ENCODE measurements at regions of chr10 and their contacts with region 1.

Region 1: DNA sequence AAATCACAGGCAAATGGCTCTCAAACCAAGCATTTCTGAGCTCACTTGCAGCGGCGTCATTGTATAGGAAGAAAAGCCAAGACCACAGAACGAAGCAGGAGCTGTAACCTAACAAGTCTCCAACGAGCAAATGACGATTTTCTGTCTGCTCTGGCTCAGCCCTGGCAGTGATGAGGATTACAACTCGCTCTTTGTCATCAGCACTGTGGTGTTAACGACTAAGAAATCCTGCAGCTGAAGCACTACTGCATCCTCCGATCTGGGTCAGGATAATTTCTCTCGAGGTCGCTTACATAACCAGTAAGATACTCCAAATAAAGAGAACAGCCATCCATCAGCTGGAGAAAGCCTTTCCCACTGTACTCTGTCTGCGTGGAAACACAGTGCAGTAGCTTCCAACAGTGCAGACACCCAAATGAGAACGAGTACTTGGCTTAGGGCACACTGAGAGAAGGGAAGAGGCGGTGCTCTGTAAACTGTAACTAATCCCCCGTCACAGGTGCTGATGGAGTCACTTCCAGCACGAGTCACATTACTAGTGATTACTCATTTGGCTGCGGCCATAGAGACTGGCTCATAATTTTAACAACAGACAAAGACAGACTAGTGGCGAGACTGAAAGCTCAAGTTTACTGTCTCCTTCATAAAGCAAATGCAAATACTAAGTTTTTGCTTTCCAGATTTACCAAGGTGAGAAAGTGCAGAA is 135.8 kb downstream of the NRBF2 start:
- DNase-seq: peak; percentile 81
- H3K4me3 Mint-ChIP-seq: peak overlapping the region; percentile 92
- H3K27ac Mint-ChIP-seq: peak overlapping the region; percentile 94
- H3K4me1 Mint-ChIP-seq: peaks cover 25% of the 10 kb centered on the region
- H3K27me3 Mint-ChIP-seq: no peaks in the 10 kb centered on the region

Region 2: GRCh38 chr10:62063795-62064472 is 1205.0 kb before region 1 on chr10:
- intact Hi-C with region 1: loop called (anchors 5 kb)
- DNase-seq: no peak
- H3K4me3 Mint-ChIP-seq: peak overlapping the region; percentile 39
- H3K27ac Mint-ChIP-seq: peak overlapping the region; percentile 87
- H3K4me1 Mint-ChIP-seq: peaks cover 72% of the 10 kb centered on the region
- H3K27me3 Mint-ChIP-seq: no peaks in the 10 kb centered on the region

Region 3: GRCh38 chr10:63133056-63133820 is 135.7 kb before region 1 on chr10 and contains the start of gene NRBF2:
- intact Hi-C with region 1: loop called (anchors 5 kb)
- DNase-seq: peak; percentile 96
- H3K4me3 Mint-ChIP-seq: peak within 1 kb of the TSS; percentile 94
- H3K27ac Mint-ChIP-seq: peak within 1 kb of the TSS; percentile 95
- H3K4me1 Mint-ChIP-seq: peaks cover 19% of the 10 kb centered on the region
- H3K27me3 Mint-ChIP-seq: peaks cover 3% of the 10 kb centered on the region
- total RNA-seq, gene NRBF2: 32.2 and 32.7 TPM in 2 replicates

Region 4: GRCh38 chr10:63217120-63217605 is 51.8 kb before region 1 on chr10:
- intact Hi-C with region 1: loop called (anchors 2 kb)
- DNase-seq: no peak
- H3K4me3 Mint-ChIP-seq: no peak overlapping the region
- H3K27ac Mint-ChIP-seq: no peak overlapping the region
- H3K4me1 Mint-ChIP-seq: peaks cover 39% of the 10 kb centered on the region
- H3K27me3 Mint-ChIP-seq: no peaks in the 10 kb centered on the region

Region 5: GRCh38 chr10:63297941-63298340 is 29.0 kb after region 1 on chr10:
- intact Hi-C with region 1: no loop called
- DNase-seq: no peak
- H3K4me3 Mint-ChIP-seq: no peak overlapping the region
- H3K27ac Mint-ChIP-seq: no peak overlapping the region
- H3K4me1 Mint-ChIP-seq: no peaks in the 10 kb centered on the region
- H3K27me3 Mint-ChIP-seq: no peaks in the 10 kb centered on the region

Region 6: DNA sequence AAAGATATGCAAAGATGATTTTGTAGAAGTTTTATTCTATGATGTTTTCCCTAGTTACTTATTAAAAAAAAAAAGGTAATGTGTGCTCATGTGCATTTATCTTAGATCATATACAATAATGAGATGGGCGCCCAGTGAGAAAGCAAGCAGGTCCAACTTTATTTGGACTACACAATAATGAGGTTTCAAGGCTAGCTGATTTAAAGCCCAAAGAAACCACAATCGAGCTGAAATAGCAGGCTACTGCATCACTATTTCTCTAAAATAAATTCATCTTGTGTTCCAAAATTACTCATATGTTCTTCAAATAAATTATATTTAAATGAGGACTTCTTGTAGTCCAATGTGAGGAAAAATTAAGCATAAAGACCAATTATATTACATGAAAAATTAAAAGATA is 86.7 kb after region 1 on chr10:
- intact Hi-C with region 1: loop called (anchors 1 kb)
- DNase-seq: no peak
- H3K4me3 Mint-ChIP-seq: no peak overlapping the region
- H3K27ac Mint-ChIP-seq: peak overlapping the region; percentile 28
- H3K4me1 Mint-ChIP-seq: peaks cover 17% of the 10 kb centered on the region
- H3K27me3 Mint-ChIP-seq: no peaks in the 10 kb centered on the region

Region 7: DNA sequence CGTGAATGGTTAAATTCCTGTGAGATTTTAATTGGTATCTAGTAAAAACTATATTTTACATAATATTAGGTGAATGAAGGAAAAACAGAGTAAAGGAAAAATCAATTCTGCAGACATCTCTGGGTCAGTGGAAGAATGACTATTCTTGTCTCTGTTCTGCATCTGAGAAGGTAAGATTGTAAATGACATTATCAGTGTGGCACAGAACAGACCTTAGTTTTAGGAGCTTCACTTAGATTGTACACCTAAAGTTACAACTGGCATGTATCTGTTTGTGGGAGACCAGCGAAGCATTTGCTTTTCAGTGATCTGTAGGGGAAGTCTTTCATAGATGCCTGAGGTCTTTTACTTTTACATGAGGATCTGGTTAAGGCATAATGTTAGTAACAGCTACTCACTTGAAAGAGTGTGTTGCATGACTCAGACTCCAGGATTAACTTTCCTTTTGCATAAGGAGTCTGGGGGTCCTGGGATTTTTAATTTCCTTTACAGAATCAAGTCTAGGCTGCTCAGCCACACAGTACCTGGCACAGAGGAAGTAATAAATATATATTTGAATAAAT is 140.6 kb after region 1 on chr10:
- intact Hi-C with region 1: no loop called
- DNase-seq: no peak
- H3K4me3 Mint-ChIP-seq: no peak overlapping the region
- H3K27ac Mint-ChIP-seq: no peak overlapping the region
- H3K4me1 Mint-ChIP-seq: peaks cover 9% of the 10 kb centered on the region
- H3K27me3 Mint-ChIP-seq: no peaks in the 10 kb centered on the region

Region 8: DNA sequence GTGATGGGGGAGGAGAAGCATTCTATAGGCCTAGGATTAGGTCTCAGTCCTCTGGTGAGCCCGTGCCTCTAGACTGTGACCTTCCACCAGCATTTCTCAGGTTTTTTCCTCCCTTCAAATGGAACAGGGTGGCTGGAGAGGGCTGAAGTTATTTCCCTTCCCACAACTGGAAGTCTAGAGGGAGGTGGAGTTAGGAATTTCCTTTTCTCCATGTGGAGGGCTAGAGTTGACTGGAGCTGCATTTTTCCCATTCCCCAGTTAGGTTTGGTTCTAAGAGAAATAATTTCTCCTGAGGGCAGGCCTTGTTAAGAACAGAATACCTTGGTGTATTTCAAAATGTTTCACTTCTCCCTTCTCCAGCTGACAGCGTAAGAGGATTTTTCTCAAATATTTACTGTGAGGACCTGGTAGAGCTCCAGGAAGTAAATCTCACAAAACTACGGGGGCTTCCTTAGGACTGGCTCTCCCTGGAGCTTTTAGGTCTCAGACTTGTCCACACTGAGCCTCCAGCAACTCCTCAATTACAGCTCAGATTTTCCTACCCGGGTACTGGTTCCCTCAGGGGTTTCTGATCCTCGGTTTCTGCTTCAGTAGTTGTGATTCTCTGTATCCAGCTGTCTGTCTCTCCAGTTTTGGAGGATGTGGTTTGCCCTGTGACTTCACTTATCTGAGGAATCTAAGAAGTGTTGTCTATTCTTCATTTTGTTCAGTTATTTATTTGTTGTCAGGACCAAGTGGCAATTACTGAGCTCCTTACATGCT is 246.2 kb after region 1 on chr10:
- intact Hi-C with region 1: loop called (anchors 1 kb)
- DNase-seq: peak; percentile 20
- H3K4me3 Mint-ChIP-seq: peak overlapping the region; percentile 43
- H3K27ac Mint-ChIP-seq: peak overlapping the region; percentile 80
- H3K4me1 Mint-ChIP-seq: peaks cover 56% of the 10 kb centered on the region
- H3K27me3 Mint-ChIP-seq: no peaks in the 10 kb centered on the region

Region 9: GRCh38 chr10:63707254-63707910 is 438.4 kb after region 1 on chr10:
- intact Hi-C with region 1: loop called (anchors 5 kb)
- DNase-seq: no peak
- H3K4me3 Mint-ChIP-seq: no peak overlapping the region
- H3K27ac Mint-ChIP-seq: peak overlapping the region; percentile 37
- H3K4me1 Mint-ChIP-seq: peaks cover 26% of the 10 kb centered on the region
- H3K27me3 Mint-ChIP-seq: peaks cover 2% of the 10 kb centered on the region

Measured in activated T-helper 2 cell treated with anti-CD3 and anti-CD28 coated beads, Interferon-gamma antibody, Interleukin-2, Interleukin-4, amounts not matched to agents 10 μg/mL and 5 μg/mL and 100 μg/mL, durations not matched to agents 14 hours and 24 hours and 36 hours (primary cell).